Heart left ventricle (tissue), 16 donors: ENCODE measurements at regions of chr9 and their contacts with region 1.

Region 1: GRCh38 chr9:105475302-105475701 is 27.5 kb downstream of the FSD1L start:
- DNase-seq: no peak
- ATAC-seq: no peak
- H3K4me3 ChIP-seq: no peak overlapping the region
- H3K27ac ChIP-seq: no peak overlapping the region
- H3K4me1 ChIP-seq: no peaks in the 10 kb centered on the region
- H3K27me3 ChIP-seq: no peaks in the 10 kb centered on the region
- CTCF ChIP-seq: peak in 10 of 12 donors; percentile 7 to 52 (median 35)
- POLR2A ChIP-seq: no peak

Region 2: GRCh38 chr9:105432247-105432842 is 43.0 kb before region 1 on chr9:
- intact Hi-C with region 1: loop called in 9 of 10 experiments (anchors 2 to 10 kb)
- DNase-seq: no peak
- ATAC-seq: peak in 1 of 4 donors; percentile 7
- H3K4me3 ChIP-seq: no peak overlapping the region
- H3K27ac ChIP-seq: no peak overlapping the region
- H3K4me1 ChIP-seq: peaks cover 0 to 6% (median 0%) of the 10 kb centered on the region in 12 donors
- H3K27me3 ChIP-seq: no peaks in the 10 kb centered on the region
- CTCF ChIP-seq: no peak
- POLR2A ChIP-seq: no peak